Activated CD4-positive, alpha-beta T cell treated with anti-CD3 and anti-CD28 coated beads, Interleukin-2, amount 10 ng/mL, durations not matched to agents 24 days and 14 days (primary cell): ENCODE measurements at regions of chr9 and their contacts with region 1.

Region 1: GRCh38 chr9:92764988-92765936 is 629 bp upstream of the BICD2 start:
- DNase-seq: peak; percentile 99
- H3K4me3 Mint-ChIP-seq: peak overlapping the region; percentile 83
- H3K27ac Mint-ChIP-seq: peak overlapping the region; percentile 91
- H3K4me1 Mint-ChIP-seq: peaks cover 44% of the 10 kb centered on the region
- H3K27me3 Mint-ChIP-seq: peaks cover 3% of the 10 kb centered on the region

Region 2: GRCh38 chr9:92293452-92294296 is 471.6 kb before region 1 on chr9 and contains the start of gene IARS1:
- intact Hi-C with region 1: loop called (anchors 1 kb)
- DNase-seq: peak; percentile 100
- H3K4me3 Mint-ChIP-seq: peak within 1 kb of the TSS; percentile 88
- H3K27ac Mint-ChIP-seq: peak within 1 kb of the TSS; percentile 100
- H3K4me1 Mint-ChIP-seq: peaks cover 55% of the 10 kb centered on the region
- H3K27me3 Mint-ChIP-seq: no peaks in the 10 kb centered on the region
- total RNA-seq, gene IARS1: 226 and 234 TPM in 2 replicates

Region 3: DNA sequence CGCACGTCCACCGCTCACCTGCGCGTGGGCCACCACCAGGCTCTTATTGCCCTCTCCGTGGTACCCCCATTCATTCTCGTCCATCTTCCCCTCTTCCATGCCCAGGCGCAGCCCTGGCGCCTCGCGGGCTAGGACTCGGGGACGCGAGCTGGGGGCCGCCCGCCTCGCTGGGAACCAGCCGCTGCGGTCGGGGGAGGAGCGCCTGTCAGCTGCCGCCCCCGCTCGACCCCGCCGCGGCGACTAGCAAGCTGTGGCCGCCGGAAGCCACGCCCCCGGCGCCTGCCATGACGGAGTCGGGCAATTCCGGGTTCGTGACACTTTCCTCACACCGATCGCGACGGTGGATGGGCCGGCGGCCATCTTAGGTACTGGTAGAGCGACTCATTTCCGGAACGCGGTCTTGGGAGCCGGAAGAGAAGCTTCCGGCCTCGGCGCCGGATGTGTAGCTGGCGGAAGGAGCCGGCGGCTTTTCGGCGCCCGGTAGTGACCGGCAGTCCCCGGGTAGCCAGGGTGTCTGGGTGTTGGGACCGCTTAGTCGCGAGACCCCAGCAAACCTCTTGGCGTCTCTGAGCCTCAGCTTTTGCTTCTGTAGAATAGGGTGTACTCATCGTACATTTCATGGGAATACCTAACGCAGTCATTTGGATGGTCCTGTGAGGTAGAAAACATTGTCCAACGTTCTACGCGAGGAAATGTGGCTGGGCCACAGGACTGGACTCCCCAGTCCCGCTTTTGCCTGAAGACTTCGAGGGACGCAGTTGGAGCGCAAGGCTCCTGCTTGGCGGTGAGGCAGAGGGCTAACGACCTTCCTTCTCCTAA is 95.2 kb before region 1 on chr9 and contains the start of gene IPPK:
- intact Hi-C with region 1: loop called (anchors 1 kb)
- DNase-seq: peak; percentile 99
- H3K4me3 Mint-ChIP-seq: peak within 1 kb of the TSS; percentile 95
- H3K27ac Mint-ChIP-seq: peak within 1 kb of the TSS; percentile 74
- H3K4me1 Mint-ChIP-seq: peaks cover 25% of the 10 kb centered on the region
- H3K27me3 Mint-ChIP-seq: no peaks in the 10 kb centered on the region
- total RNA-seq, gene IPPK: 13.5 and 15.6 TPM in 2 replicates

Region 4: DNA sequence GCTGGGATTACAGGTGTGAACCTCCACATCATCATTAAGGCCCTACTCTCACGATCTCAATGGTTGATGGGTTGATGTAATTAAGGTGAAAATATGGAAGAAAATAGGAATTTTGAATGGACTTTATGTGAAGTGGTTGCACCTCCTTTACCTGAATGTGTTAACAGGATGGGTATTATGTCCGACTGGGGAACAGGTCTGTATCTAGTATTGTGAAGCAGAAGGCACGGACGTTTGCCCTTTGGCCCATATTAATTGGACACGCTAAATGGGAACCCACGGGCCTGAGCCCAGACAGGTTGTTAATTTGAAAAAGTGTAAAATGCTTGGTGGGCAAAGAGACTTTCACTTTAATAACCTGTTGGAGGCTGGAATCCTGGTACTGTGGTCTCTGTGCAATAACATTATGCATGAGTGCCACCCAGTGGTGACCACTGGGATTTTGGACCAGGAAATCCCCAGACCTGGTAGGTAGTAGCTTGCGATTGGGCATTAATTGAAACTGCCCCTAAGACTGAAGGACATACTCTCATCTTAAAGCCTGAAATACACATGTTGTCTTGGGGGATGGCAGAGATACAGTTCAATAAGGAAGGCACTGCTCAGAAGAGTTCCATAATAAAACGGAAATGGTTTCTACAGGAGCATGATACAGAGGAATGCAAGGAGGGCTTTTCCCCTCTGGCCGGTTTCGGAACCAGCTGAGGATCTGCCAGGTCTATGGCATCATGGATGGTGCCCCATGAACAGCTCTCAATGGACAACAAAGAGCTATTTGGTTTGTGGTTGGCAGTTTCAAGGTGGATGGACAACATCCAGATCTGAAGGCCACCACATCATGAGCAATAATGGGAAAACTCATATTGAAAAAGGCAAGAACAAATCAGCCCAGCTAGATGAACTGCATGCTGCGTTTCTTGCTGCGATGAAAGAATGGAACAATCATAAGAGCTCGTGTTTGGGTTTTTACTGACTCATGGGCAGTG is 25.6 kb after region 1 on chr9:
- intact Hi-C with region 1: loop called (anchors 1 kb)
- DNase-seq: peak; percentile 92
- H3K4me3 Mint-ChIP-seq: no peak overlapping the region
- H3K27ac Mint-ChIP-seq: no peak overlapping the region
- H3K4me1 Mint-ChIP-seq: peaks cover 8% of the 10 kb centered on the region
- H3K27me3 Mint-ChIP-seq: peaks cover 9% of the 10 kb centered on the region

Region 5: DNA sequence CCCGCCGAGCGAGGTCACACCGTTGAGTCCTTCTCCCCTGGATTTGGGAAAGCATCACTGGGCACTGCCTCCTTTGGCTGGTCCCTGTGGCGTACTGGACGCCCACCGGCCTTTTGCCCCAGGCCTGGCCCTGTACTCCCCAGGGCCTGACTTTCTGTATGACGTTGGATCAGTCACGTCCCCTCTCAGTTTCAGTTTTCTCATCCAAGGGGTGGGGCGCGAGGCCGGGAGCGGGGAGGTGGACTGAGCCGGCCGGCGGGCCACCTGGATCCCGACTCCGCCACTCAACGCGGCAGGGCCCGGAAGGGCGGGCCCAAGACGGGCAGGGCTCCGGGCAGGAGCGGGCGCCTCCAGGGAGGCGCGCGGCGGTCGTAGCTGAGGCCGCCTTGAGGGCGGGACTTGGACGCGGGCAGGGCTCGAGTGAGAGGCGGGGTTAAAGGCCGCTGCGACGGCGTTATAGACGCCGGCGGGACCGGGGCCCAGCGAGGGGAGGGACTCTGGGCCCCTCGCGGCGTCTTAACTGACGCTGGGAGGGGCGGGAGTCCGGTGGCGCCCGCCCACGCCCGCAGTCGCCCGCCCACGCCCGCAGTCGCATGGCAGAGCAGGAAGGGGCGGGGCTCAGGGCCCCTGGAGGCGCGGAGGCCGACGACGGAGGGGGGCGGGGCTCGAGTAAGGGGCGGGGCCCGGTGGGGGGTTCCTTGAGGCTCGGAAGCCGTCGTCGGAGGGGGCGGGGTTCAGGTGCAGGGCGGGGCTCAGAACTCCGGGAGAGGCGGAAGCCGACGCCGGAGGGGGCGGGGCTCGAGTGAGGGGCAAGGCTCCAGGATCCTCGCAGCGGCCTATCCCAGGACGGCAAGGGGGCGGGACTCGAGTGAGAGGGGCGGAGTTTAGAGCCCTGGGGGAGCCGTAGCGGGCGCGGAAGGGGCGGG is 330.2 kb after region 1 on chr9:
- intact Hi-C with region 1: loop called (anchors 2 kb)
- DNase-seq: peak; percentile 100
- H3K4me3 Mint-ChIP-seq: peak overlapping the region; percentile 79
- H3K27ac Mint-ChIP-seq: peak overlapping the region; percentile 98
- H3K4me1 Mint-ChIP-seq: peaks cover 65% of the 10 kb centered on the region
- H3K27me3 Mint-ChIP-seq: no peaks in the 10 kb centered on the region

Region 6: GRCh38 chr9:94166237-94166963 is 1401.1 kb after region 1 on chr9:
- intact Hi-C with region 1: loop called (anchors 5 kb)
- DNase-seq: peak; percentile 98
- H3K4me3 Mint-ChIP-seq: peak overlapping the region; percentile 90
- H3K27ac Mint-ChIP-seq: peak overlapping the region; percentile 88
- H3K4me1 Mint-ChIP-seq: peaks cover 37% of the 10 kb centered on the region
- H3K27me3 Mint-ChIP-seq: no peaks in the 10 kb centered on the region